Esophagus squamous epithelium (tissue), 5 donors: ENCODE measurements at regions of chr14 and their contacts with region 1.

Region 1: GRCh38 chr14:24806061-24806678 is 172.2 kb upstream of the GZMB start:
- DNase-seq: no peak
- H3K4me3 ChIP-seq: no peak overlapping the region
- H3K27ac ChIP-seq: no peak overlapping the region
- H3K4me1 ChIP-seq: peaks cover 0 to 4% (median 0%) of the 10 kb centered on the region in 3 donors
- H3K27me3 ChIP-seq: no peaks in the 10 kb centered on the region
- CTCF ChIP-seq: peak; percentile 33 to 80 (median 70)
- POLR2A ChIP-seq: no peak

Region 2: DNA sequence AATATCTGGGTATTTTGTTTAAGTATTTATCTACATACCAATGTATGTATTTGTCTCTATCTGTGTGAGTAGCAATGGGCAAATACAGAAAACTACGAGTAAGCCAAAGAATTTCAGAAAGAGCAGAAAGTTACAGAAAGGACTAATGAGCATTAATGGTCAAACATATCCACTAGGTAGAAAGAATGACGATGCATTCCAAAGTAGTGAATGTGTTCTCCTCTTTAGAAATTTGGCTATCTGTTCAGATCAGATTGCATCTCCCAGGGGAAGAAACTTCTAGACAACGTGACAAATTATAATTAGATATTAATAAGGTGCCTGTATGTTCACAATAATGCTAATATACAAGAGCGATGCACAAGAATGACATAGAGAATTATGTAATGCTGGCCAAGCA is 22.3 kb after region 1 on chr14:
- intact Hi-C with region 1: no loop called
- DNase-seq: no peak
- H3K4me3 ChIP-seq: no peak overlapping the region
- H3K27ac ChIP-seq: no peak overlapping the region
- H3K4me1 ChIP-seq: no peaks in the 10 kb centered on the region
- H3K27me3 ChIP-seq: no peaks in the 10 kb centered on the region
- CTCF ChIP-seq: no peak
- POLR2A ChIP-seq: no peak

Region 3: GRCh38 chr14:25132732-25133422 is 326.7 kb after region 1 on chr14:
- intact Hi-C with region 1: loop called (anchors 10 kb)
- DNase-seq: no peak
- H3K4me3 ChIP-seq: no peak overlapping the region
- H3K27ac ChIP-seq: no peak overlapping the region
- H3K4me1 ChIP-seq: no peaks in the 10 kb centered on the region
- H3K27me3 ChIP-seq: peaks cover 0 to 59% (median 0%) of the 10 kb centered on the region in 4 donors
- CTCF ChIP-seq: peak; percentile 61 to 89 (median 82)
- POLR2A ChIP-seq: no peak

Region 4: DNA sequence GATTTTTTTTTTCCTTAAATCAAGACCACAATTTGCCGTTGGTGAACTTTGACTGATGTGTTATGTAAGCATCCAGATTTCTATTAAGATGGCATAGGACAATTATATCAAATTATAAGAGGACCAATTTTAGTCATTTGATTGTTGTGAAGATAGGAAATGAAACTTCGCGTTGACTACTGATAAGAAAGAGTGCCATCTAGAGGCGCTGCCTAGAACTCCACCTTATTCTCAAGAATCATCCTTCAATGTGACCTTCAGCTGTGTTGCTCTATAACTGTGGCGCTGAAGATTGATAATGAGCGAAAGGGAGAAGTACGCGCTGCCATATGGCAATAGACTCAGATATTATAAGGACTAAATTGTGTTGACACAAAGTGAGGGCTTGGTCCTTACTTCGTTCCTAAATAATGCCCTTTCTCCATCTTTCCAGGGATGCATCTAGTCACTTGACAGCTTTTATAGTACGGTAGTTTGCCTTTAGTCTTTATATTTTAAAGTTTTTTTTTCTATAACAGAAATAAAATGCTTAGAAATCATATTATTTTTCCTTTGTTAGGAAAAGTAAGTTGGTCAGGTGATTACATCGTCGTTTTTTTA is 594.5 kb after region 1 on chr14:
- intact Hi-C with region 1: loop called (anchors 10 kb)
- DNase-seq: no peak
- H3K4me3 ChIP-seq: no peak overlapping the region
- H3K27ac ChIP-seq: no peak overlapping the region
- H3K4me1 ChIP-seq: no peaks in the 10 kb centered on the region
- H3K27me3 ChIP-seq: no peaks in the 10 kb centered on the region
- CTCF ChIP-seq: peak; percentile 23 to 59 (median 49)
- POLR2A ChIP-seq: no peak